K562 (cell line): ENCODE measurements at regions of chr7 and their contacts with region 1.

Region 1: DNA sequence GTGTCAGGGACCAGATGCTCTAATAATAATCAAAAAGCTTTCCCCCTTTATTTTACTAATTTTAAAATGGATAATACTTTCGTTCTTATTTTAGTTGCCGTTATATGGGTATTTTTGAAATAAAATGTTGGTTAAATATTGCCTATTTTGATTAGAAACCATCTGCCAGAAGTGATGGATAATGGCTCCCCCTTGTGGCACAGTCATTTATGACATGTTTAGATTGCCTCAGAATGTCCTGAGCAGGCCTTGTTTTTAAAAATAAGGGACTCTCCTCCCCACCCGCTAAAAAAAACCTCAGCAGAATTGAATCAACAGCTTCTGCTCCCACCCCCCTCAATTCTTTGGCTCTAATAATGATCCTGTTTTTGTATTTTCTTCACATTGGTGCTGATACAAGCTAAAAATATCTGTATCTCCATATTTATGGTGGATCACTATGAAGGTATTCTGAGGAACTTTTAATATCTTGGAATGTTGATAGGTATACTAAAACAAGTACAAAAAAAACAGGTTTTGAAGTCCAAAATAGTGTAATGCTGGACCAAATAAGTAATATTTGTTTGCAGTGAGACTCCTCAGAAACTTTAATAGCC is 38.8 kb downstream of the TMEM60 start:
- DNase-seq: peak; percentile 46 to 87 (median 62)
- ATAC-seq: peak; percentile 90
- H3K4me3 ChIP-seq: no peak overlapping the region
- H3K27ac ChIP-seq: no peak overlapping the region
- H3K4me1 ChIP-seq: peaks cover 0 to 3% of the 10 kb centered on the region in 2 experiments; a peak in 1 of 5 replicates
- H3K27me3 ChIP-seq: no peaks in the 10 kb centered on the region
- CTCF ChIP-seq: peak; percentile 70 to 91 (median 77)
- EP300 ChIP-seq: no peak
- POLR2A ChIP-seq: no peak
- RAD21 ChIP-seq: peak; percentile 91 to 93

Region 2: GRCh38 chr7:77606562-77606961 is 152.8 kb before region 1 on chr7:
- CTCF ChIA-PET with region 1: no interaction called
- POLR2A ChIA-PET with region 1: no interaction called
- in situ Hi-C with region 1: no loop called
- intact Hi-C with region 1: no loop called
- DNase-seq: no peak
- ATAC-seq: no peak; the same call in 2 of the 3 replicates
- H3K4me3 ChIP-seq: no peak overlapping the region
- H3K27ac ChIP-seq: no peak overlapping the region
- H3K4me1 ChIP-seq: no peaks in the 10 kb centered on the region
- H3K27me3 ChIP-seq: no peaks in the 10 kb centered on the region
- CTCF ChIP-seq: no peak
- EP300 ChIP-seq: no peak
- POLR2A ChIP-seq: no peak
- RAD21 ChIP-seq: no peak

Region 3: DNA sequence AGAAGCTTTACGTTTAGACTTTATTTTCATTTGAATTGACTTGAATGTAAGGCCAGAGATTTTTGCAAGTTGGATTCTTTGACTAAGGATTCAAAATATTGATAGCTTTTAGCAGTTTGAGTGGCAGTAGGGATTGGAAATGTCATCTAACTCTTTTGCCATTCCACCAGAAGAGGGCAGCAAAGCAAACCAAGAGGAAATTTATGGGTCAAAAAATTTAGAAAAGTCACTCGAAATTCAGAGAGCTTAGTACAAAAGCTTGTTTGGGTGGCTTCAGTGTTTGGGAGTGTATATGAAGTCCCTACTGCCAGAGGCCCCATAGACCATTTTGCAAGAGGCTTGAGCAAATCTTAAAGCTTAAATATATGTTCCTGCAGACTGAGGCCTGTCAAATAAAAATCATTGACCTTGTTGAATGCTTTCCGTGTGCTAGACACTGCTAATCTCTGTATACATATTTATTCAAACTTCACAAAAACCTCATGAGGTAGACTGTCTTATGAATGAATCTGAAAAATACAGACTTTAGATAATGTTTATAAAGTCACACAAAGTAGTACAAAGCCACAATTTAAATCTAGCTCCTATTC is 107.7 kb before region 1 on chr7:
- CTCF ChIA-PET with region 1: interaction called, 32 read pairs
- POLR2A ChIA-PET with region 1: interaction called, 3 read pairs
- in situ Hi-C with region 1: loop called (anchors 5 kb)
- intact Hi-C with region 1: no loop called
- DNase-seq: peak; percentile 53 to 72 (median 56)
- ATAC-seq: peak; percentile 71
- H3K4me3 ChIP-seq: no peak overlapping the region
- H3K27ac ChIP-seq: no peak overlapping the region
- H3K4me1 ChIP-seq: no peaks in the 10 kb centered on the region
- H3K27me3 ChIP-seq: no peaks in the 10 kb centered on the region
- CTCF ChIP-seq: peak; percentile 53 to 84 (median 70); a peak in 5 of 6 replicates
- EP300 ChIP-seq: no peak
- POLR2A ChIP-seq: no peak
- RAD21 ChIP-seq: peak; percentile 63 to 76

Region 4: DNA sequence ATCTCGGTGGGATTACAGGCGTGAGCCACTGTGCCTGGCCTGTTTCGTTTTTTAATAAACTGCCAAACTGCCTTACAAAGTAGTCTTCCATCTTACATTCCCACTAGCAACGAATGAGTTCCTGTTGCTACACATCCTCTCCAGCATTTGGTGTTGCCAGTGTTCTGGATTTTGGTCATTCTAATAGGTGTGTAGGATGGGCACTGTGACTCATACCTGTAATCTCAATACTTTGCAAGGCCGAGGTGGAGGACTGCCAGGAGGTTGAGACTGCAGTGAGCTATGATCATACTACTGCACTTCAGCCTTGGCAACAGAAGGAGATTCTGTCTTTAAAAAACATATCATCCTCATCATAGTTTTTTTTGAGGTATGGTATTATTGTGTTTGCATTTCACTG is 84.5 kb before region 1 on chr7:
- CTCF ChIA-PET with region 1: no interaction called
- POLR2A ChIA-PET with region 1: no interaction called
- in situ Hi-C with region 1: no loop called
- intact Hi-C with region 1: loop called (anchors 5 kb)
- DNase-seq: no peak
- ATAC-seq: no peak; the same call in 2 of the 3 replicates
- H3K4me3 ChIP-seq: no peak overlapping the region
- H3K27ac ChIP-seq: no peak overlapping the region
- H3K4me1 ChIP-seq: no peaks in the 10 kb centered on the region
- H3K27me3 ChIP-seq: no peaks in the 10 kb centered on the region
- CTCF ChIP-seq: no peak
- EP300 ChIP-seq: no peak
- POLR2A ChIP-seq: no peak
- RAD21 ChIP-seq: no peak

Region 5: DNA sequence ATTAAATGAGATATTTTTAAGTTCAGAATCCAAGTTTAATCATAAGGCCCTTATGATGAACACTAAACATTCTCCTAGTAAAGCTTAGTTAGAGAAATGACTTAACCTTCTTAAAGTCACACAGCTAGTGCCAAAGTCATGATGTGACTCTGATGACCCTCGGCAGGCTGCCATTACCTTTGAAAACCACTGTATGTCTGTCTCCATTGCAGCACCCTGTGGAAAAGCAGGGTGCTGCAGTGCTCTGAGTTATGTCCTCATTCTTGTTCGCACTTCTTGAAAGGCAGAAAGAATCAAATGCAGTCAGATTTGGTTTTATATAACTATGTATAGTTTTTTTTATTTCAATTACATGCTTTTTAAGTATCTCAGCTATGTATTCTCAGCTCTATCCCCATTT is 144.2 kb after region 1 on chr7:
- CTCF ChIA-PET with region 1: interaction called, 5 read pairs
- POLR2A ChIA-PET with region 1: no interaction called
- in situ Hi-C with region 1: no loop called
- intact Hi-C with region 1: loop called (anchors 5 kb)
- DNase-seq: peak in 2 of 4 experiments; percentile 62 to 73
- ATAC-seq: peak; percentile 88
- H3K4me3 ChIP-seq: no peak overlapping the region
- H3K27ac ChIP-seq: no peak overlapping the region
- H3K4me1 ChIP-seq: peaks cover 5 to 16% of the 10 kb centered on the region in 2 experiments; a peak in 3 of 5 replicates
- H3K27me3 ChIP-seq: no peaks in the 10 kb centered on the region
- CTCF ChIP-seq: peak; percentile 56 to 73 (median 68)
- EP300 ChIP-seq: no peak
- POLR2A ChIP-seq: no peak
- RAD21 ChIP-seq: peak; percentile 42 to 72

Region 6: DNA sequence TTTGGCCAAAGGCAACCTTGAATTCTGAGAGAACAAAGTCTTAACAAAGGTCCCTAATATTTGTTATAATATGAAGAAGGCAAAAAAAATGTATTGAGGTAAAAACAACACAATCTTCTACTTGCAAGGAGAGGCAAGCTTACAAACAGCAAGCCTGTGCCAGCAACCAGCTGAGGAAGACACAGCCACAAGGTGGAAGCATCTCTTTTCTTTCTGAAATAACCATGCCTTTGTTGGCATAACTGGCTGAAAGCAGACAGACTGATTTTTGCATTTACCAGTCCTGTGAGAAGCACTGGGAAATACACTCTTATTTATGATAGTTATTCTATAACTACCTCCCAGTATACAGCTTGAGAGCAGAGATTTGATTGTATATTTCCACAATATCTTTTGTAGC is 331.2 kb after region 1 on chr7:
- CTCF ChIA-PET with region 1: no interaction called
- POLR2A ChIA-PET with region 1: no interaction called
- in situ Hi-C with region 1: no loop called
- intact Hi-C with region 1: no loop called
- DNase-seq: no peak
- ATAC-seq: no peak
- H3K4me3 ChIP-seq: no peak overlapping the region
- H3K27ac ChIP-seq: no peak overlapping the region
- H3K4me1 ChIP-seq: no peaks in the 10 kb centered on the region
- H3K27me3 ChIP-seq: no peaks in the 10 kb centered on the region
- CTCF ChIP-seq: 0 out of 6 replicates have a peak, but pooled peaks of 1 of the 3 experiments have one; percentile 2
- EP300 ChIP-seq: no peak
- POLR2A ChIP-seq: no peak
- RAD21 ChIP-seq: peak in 1 of 2 experiments; percentile 37; a peak in 2 of 4 replicates